Naive thymus-derived CD4-positive, alpha-beta T cell (primary cell): ENCODE measurements at regions of chr17 and their contacts with region 1.

Region 1: GRCh38 chr17:7383742-7384488 is 3.0 kb downstream of the TNK1 start:
- DNase-seq: peak; percentile 74 to 88 (median 86)
- ATAC-seq: peak; percentile 98
- H3K4me3 ChIP-seq: peak overlapping the region; percentile 82
- H3K4me3 Mint-ChIP-seq: peak overlapping the region; percentile 74 to 89 (median 82)
- H3K27ac ChIP-seq: peak overlapping the region; percentile 94
- H3K27ac Mint-ChIP-seq: peak overlapping the region; percentile 73 to 96 (median 94)
- H3K4me1 ChIP-seq: peaks cover 10 to 13% of the 10 kb centered on the region in 2 donors
- H3K4me1 Mint-ChIP-seq: peaks cover 10 to 23% (median 15%) of the 10 kb centered on the region in 7 donors
- H3K27me3 ChIP-seq: peaks cover 0 to 11% of the 10 kb centered on the region in 2 donors
- H3K27me3 Mint-ChIP-seq: peaks cover 27 to 37% (median 33%) of the 10 kb centered on the region in 5 donors

Region 2: DNA sequence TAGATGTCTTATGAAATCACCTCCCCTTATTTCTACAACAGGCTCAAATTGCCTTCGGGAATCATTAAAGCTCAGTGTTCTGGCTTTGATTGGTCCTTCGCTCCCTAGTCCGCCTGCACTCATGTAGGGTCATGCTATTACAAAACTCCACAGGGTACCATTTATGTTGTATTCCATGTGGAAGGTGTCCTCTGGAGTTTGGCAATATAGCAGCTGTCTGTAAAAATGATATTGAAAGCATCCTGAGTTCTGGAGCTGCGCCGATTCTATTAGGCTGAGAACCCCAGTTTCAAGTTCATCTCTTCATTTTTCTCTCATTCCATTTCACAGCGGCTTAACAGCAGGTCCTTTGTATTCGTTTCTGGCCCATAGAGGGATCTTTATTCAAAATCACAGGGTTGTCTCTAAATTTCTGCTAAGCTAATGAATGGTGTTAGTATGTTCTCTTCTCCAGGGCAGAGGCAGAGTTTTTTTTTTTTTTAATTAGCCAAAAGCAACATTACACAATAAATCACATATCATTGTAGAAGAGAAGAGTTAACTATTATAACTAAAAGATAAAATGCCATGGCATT is 480.5 kb before region 1 on chr17:
- CTCF ChIA-PET with region 1: no interaction called
- POLR2A ChIA-PET with region 1: no interaction called
- intact Hi-C with region 1: no loop called
- DNase-seq: no peak
- ATAC-seq: no peak
- H3K4me3 ChIP-seq: no peak overlapping the region
- H3K4me3 Mint-ChIP-seq: no peak overlapping the region
- H3K27ac ChIP-seq: no peak overlapping the region
- H3K27ac Mint-ChIP-seq: no peak overlapping the region
- H3K4me1 ChIP-seq: no peaks in the 10 kb centered on the region
- H3K4me1 Mint-ChIP-seq: no peaks in the 10 kb centered on the region
- H3K27me3 ChIP-seq: no peaks in the 10 kb centered on the region
- H3K27me3 Mint-ChIP-seq: peaks cover 0 to 4% (median 3%) of the 10 kb centered on the region in 5 donors

Region 3: GRCh38 chr17:7336240-7337175 is 47.4 kb before region 1 on chr17 and contains the start of gene ACAP1:
- CTCF ChIA-PET with region 1: no interaction called
- POLR2A ChIA-PET with region 1: interaction called, 7 read pairs
- intact Hi-C with region 1: loop called (anchors 1 to 5 kb)
- DNase-seq: peak; percentile 56 to 85 (median 82)
- ATAC-seq: peak; percentile 99
- H3K4me3 ChIP-seq: peak within 1 kb of the TSS; percentile 99
- H3K4me3 Mint-ChIP-seq: peak within 1 kb of the TSS; percentile 89 to 99 (median 94)
- H3K27ac ChIP-seq: peak within 1 kb of the TSS; percentile 81
- H3K27ac Mint-ChIP-seq: peak within 1 kb of the TSS; percentile 89 to 100 (median 95)
- H3K4me1 ChIP-seq: peaks cover 31 to 44% of the 10 kb centered on the region in 2 donors
- H3K4me1 Mint-ChIP-seq: peaks cover 49 to 76% (median 60%) of the 10 kb centered on the region in 7 donors
- H3K27me3 ChIP-seq: no peaks in the 10 kb centered on the region
- H3K27me3 Mint-ChIP-seq: no peaks in the 10 kb centered on the region
- total RNA-seq, gene ACAP1: 482 to 708 (median 599) TPM

Region 4: DNA sequence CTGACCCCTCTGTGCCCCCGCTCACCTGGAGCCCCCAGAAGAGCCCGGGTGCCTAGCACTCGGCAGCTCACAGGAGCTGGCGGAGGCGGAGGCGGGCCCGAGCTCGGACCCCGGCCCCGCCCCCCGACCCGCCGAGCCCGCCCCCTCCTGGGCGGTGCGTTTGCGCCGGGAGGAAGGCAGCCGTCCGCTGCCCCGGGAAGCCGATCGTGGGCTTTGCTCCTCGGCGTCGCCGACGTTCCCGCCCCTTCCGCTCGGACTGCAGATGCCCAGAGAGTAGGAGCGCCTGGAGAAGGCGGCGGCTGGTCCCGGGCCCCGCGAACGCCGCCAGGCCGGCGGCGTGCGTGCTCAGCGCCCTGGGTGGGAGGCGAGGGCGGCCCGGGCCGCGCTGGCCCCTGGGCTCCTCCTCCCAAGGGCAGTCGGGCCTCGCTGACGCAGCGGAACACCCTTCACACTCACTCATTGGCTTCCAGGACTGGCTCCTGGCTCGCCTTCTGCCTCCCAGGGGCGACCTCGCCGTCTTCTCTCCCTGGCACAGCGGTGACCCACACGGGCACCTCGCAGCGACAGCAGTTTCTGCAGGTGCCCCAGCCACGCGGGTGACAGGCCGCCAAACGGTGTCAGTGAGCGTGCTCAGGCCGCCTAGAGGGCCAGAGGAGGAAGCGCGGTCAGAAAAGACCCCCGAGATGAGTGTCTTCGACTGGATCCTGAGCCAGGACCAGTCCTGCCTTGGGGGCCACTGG is 10.7 kb after region 1 on chr17 and contains the start of gene PLSCR3:
- CTCF ChIA-PET with region 1: interaction called, 5 read pairs
- POLR2A ChIA-PET with region 1: interaction called, 17 read pairs
- intact Hi-C with region 1: loop called (anchors 1 kb)
- DNase-seq: peak; percentile 68 to 91 (median 82)
- ATAC-seq: peak; percentile 94
- H3K4me3 ChIP-seq: peak within 1 kb of the TSS; percentile 94
- H3K4me3 Mint-ChIP-seq: peak within 1 kb of the TSS; percentile 93 to 97 (median 95)
- H3K27ac ChIP-seq: peak within 1 kb of the TSS; percentile 87
- H3K27ac Mint-ChIP-seq: peak within 1 kb of the TSS; percentile 85 to 97 (median 92)
- H3K4me1 ChIP-seq: peaks cover 7 to 25% of the 10 kb centered on the region in 2 donors
- H3K4me1 Mint-ChIP-seq: peaks cover 25 to 46% (median 27%) of the 10 kb centered on the region in 7 donors
- H3K27me3 ChIP-seq: no peaks in the 10 kb centered on the region
- H3K27me3 Mint-ChIP-seq: no peaks in the 10 kb centered on the region
- total RNA-seq, gene PLSCR3: 74.8 to 142 (median 85.0) TPM